ENCODE measurements at regions of chr13 and their contacts with region 1.

Region 1: DNA sequence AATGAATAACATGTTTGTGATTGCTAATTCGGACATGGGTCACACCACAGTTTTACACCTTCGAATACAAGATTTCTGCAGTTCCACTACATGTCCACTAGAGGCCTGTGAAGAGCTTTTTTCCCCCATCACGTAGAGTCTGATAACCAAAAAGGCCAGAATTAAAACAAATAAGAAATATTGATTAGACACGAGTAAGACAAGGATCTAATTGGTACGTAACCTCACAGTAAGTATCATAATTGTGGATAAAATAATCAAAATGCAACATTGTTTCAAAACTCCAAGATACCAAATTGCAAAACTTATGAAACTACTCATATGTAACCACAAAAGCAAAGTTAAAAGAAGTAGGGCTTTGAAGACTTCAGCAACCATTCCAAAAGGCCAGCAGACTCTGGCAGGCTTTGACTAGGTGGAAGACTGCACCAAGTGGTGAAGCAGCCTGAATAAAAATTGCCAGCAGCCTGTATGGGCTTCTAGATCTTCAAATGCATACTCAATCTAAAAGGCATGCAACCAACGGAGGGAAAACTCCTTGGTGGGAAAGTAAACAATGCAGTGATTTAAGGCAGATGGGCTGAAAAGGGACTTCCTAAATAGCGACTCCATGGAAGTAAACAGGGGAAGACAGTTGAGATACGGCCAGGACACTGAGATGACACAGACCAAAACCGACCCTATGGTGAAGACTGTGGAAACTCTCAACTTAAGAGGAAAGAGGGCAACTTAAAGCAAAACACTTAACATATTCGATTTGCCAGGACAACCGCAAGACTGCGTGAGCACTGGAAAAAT is 56.7 kb downstream of the STARD13 start:
- DNase-seq: peak; percentile 62
- ATAC-seq: peak; percentile 57
- H3K4me3 ChIP-seq: peak overlapping the region; percentile 2 to 52 (median 5); a peak in 3 of 6 replicates
- H3K27ac ChIP-seq: peak overlapping the region; percentile 96
- H3K4me1 ChIP-seq: peaks cover 55% of the 10 kb centered on the region
- H3K27me3 ChIP-seq: no peaks in the 10 kb centered on the region
- CTCF ChIP-seq: peak; percentile 76
- EP300 ChIP-seq: no peak
- POLR2A ChIP-seq: no peak
- RAD21 ChIP-seq: peak; percentile 80

Region 2: GRCh38 chr13:32791545-32792172 is 437.2 kb before region 1 on chr13:
- CTCF ChIA-PET with region 1: no interaction called
- POLR2A ChIA-PET with region 1: no interaction called
- in situ Hi-C with region 1: no loop called
- intact Hi-C with region 1: no loop called
- DNase-seq: peak; percentile 30
- ATAC-seq: peak; percentile 59
- H3K4me3 ChIP-seq: no peak overlapping the region
- H3K27ac ChIP-seq: no peak overlapping the region
- H3K4me1 ChIP-seq: peaks cover 20% of the 10 kb centered on the region
- H3K27me3 ChIP-seq: no peaks in the 10 kb centered on the region; a peak in 1 of 5 replicates
- CTCF ChIP-seq: no peak
- EP300 ChIP-seq: no peak
- POLR2A ChIP-seq: no peak
- RAD21 ChIP-seq: no peak

Region 3: DNA sequence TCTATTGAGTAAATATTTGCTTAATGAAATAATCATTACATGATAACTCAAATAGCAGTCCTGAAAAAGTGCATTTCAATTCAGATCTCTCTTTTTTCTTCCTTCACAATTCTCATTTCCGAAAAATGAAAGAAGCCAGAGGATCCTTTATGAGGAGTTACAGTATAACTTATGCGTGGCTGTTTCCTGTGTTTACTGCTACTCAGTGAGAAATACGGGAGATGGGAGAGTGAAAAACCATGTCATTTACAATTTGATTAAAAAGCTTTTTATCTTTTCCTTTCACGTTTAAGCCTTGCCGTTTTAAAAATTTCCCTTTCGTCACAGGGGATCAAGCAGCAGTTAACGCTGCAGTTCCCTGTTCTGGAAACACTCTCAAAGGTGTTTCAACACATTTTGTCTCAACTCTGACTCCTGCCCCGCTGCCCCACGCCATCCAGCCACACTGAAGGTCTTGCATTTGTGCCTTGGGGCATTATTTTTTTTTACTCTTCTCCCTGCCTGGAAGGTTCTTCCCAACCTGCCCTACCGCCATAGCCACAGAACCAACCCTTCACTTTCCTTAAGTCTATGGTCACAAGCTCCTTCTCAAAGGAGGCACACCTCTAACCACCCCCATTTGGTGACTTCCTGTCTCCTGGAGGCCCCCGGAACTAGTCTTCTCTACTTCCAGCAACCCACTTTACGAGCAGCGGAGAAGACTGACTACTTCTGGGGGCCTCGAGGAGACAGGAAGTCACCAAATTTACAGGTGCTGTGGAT is 195.6 kb before region 1 on chr13:
- CTCF ChIA-PET with region 1: no interaction called
- POLR2A ChIA-PET with region 1: no interaction called
- in situ Hi-C with region 1: no loop called
- intact Hi-C with region 1: no loop called
- DNase-seq: no peak
- ATAC-seq: no peak
- H3K4me3 ChIP-seq: no peak overlapping the region
- H3K27ac ChIP-seq: no peak overlapping the region
- H3K4me1 ChIP-seq: no peaks in the 10 kb centered on the region
- H3K27me3 ChIP-seq: peaks cover 0 to 3% of the 10 kb centered on the region in 2 experiments; a peak in 1 of 5 replicates
- CTCF ChIP-seq: no peak
- EP300 ChIP-seq: no peak
- POLR2A ChIP-seq: no peak
- RAD21 ChIP-seq: no peak

Region 4: GRCh38 chr13:33169273-33169980 is 59.4 kb before region 1 on chr13:
- CTCF ChIA-PET with region 1: no interaction called
- POLR2A ChIA-PET with region 1: interaction called, 13 read pairs
- in situ Hi-C with region 1: no loop called
- intact Hi-C with region 1: no loop called
- DNase-seq: no peak
- ATAC-seq: no peak; the same call in 2 of the 3 replicates
- H3K4me3 ChIP-seq: peak overlapping the region in 1 of 3 experiments; percentile 30; a peak in 1 of 6 replicates
- H3K27ac ChIP-seq: peak overlapping the region; percentile 85
- H3K4me1 ChIP-seq: peaks cover 65% of the 10 kb centered on the region
- H3K27me3 ChIP-seq: no peaks in the 10 kb centered on the region
- CTCF ChIP-seq: no peak
- EP300 ChIP-seq: no peak
- POLR2A ChIP-seq: no peak
- RAD21 ChIP-seq: no peak

Region 5: GRCh38 chr13:33285420-33286124 is 56.7 kb after region 1 on chr13 and contains the start of gene STARD13:
- CTCF ChIA-PET with region 1: no interaction called
- POLR2A ChIA-PET with region 1: interaction called, 16 read pairs
- in situ Hi-C with region 1: no loop called
- intact Hi-C with region 1: loop called (anchors 1 kb)
- DNase-seq: peak; percentile 92
- ATAC-seq: peak; percentile 99
- H3K4me3 ChIP-seq: peak within 1 kb of the TSS; percentile 84 to 96 (median 86)
- H3K27ac ChIP-seq: peak within 1 kb of the TSS; percentile 85
- H3K4me1 ChIP-seq: peaks cover 41% of the 10 kb centered on the region
- H3K27me3 ChIP-seq: peaks cover 0 to 5% of the 10 kb centered on the region in 2 experiments; a peak in 1 of 5 replicates
- CTCF ChIP-seq: peak; percentile 57
- EP300 ChIP-seq: no peak
- POLR2A ChIP-seq: peak; percentile 76 to 81
- RAD21 ChIP-seq: no peak
- total RNA-seq, gene STARD13: 13.8 and 14.3 TPM in 2 replicates

Region 6: DNA sequence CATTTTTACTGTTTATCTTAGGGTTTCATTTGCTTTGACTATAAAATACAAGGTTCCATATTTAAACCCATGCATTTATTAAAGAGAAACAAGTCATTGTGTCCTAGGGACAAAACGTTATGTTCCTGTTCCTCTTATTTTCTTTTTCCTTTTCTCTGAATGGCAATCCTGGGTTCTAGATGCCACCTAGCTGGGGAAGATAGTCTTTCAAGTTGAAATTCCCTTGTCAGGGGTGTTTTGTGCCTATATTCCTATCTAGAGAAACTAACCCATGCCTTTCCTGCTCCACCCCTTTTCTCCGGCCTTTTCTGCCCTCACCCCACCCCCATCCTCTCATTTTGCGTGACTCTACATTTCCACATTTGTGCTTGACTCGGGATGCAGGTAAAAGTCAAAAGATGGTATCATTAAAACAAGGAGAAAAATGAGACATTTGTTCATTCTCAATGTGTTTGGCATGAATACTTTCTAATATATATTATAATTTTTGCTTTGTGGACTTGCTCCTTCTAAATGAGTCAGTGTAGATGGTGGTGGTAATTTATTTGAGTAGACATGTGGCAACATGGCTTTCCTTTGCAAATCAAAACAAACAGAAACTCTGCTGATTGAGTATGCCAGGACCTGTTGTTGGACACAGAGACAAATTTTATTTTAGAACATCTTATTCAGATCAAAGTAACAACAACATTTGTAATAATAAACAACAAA is 83.5 kb after region 1 on chr13:
- CTCF ChIA-PET with region 1: no interaction called
- POLR2A ChIA-PET with region 1: no interaction called
- in situ Hi-C with region 1: no loop called
- intact Hi-C with region 1: loop called (anchors 2 kb)
- DNase-seq: peak; percentile 14
- ATAC-seq: no peak
- H3K4me3 ChIP-seq: no peak overlapping the region
- H3K27ac ChIP-seq: no peak overlapping the region
- H3K4me1 ChIP-seq: no peaks in the 10 kb centered on the region
- H3K27me3 ChIP-seq: no peaks in the 10 kb centered on the region
- CTCF ChIP-seq: peak; percentile 49
- EP300 ChIP-seq: no peak
- POLR2A ChIP-seq: no peak
- RAD21 ChIP-seq: 0 out of 2 replicates have a peak, but pooled peaks have one; percentile 8

Region 7: DNA sequence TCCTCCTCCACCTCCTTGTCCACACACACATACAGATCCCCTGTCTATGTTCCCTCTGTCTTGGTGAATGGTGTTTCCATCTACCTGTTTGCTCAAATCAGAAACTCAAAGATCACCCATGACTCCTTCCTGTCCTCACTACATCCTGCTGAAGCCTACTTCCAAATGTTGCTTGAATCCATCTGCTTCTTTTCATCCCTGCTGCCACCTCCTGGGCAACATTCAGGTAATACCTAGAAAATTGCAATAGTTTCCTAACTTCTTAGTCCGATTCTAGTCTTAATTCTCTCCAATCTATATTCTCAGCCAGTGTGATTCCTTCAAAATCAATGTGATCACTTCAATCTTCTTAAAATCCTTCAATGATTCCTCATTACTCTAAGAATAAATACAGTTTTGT is 212.2 kb after region 1 on chr13:
- CTCF ChIA-PET with region 1: interaction called, 11 read pairs
- POLR2A ChIA-PET with region 1: no interaction called
- in situ Hi-C with region 1: no loop called
- intact Hi-C with region 1: loop called (anchors 1 kb)
- DNase-seq: peak; percentile 35
- ATAC-seq: peak; percentile 74
- H3K4me3 ChIP-seq: no peak overlapping the region
- H3K27ac ChIP-seq: no peak overlapping the region
- H3K4me1 ChIP-seq: peaks cover 19% of the 10 kb centered on the region
- H3K27me3 ChIP-seq: no peaks in the 10 kb centered on the region
- CTCF ChIP-seq: peak; percentile 62
- EP300 ChIP-seq: no peak
- POLR2A ChIP-seq: no peak
- RAD21 ChIP-seq: no peak